K562 (cell line): ENCODE measurements at regions of chr21 and their contacts with region 1.

Region 1: GRCh38 chr21:46228345-46229051 is at the start of gene LSS:
- DNase-seq: peak; percentile 98 to 100 (median 98)
- ATAC-seq: peak; percentile 92
- H3K4me3 ChIP-seq: peak within 1 kb of the TSS; percentile 87
- H3K27ac ChIP-seq: peak within 1 kb of the TSS; percentile 90
- H3K4me1 ChIP-seq: peaks cover 38 to 39% of the 10 kb centered on the region in 2 experiments; a peak in 4 of 5 replicates
- H3K27me3 ChIP-seq: no peaks in the 10 kb centered on the region
- CTCF ChIP-seq: no peak
- EP300 ChIP-seq: no peak
- POLR2A ChIP-seq: no peak; the same call in 1 of the 2 replicates
- RAD21 ChIP-seq: no peak
- polyA plus RNA-seq, gene LSS: 2.2 to 2.7 TPM

Region 2: GRCh38 chr21:46153247-46154150 is 75.0 kb before region 1 on chr21:
- CTCF ChIA-PET with region 1: no interaction called
- POLR2A ChIA-PET with region 1: interaction called, 4 read pairs
- in situ Hi-C with region 1: no loop called
- intact Hi-C with region 1: loop called (anchors 5 kb)
- DNase-seq: peak; percentile 92 to 96 (median 96)
- ATAC-seq: peak; percentile 94
- H3K4me3 ChIP-seq: peak overlapping the region; percentile 14; the same call in 1 of the 2 replicates
- H3K27ac ChIP-seq: peak overlapping the region; percentile 74
- H3K4me1 ChIP-seq: peaks cover 15 to 78% of the 10 kb centered on the region in 2 experiments
- H3K27me3 ChIP-seq: no peaks in the 10 kb centered on the region
- CTCF ChIP-seq: peak; percentile 88 to 98 (median 93)
- EP300 ChIP-seq: peak; percentile 63; the same call in 1 of the 2 replicates
- POLR2A ChIP-seq: 0 out of 2 replicates have a peak, but pooled peaks have one; percentile 62
- RAD21 ChIP-seq: peak; percentile 71 to 80

Region 3: DNA sequence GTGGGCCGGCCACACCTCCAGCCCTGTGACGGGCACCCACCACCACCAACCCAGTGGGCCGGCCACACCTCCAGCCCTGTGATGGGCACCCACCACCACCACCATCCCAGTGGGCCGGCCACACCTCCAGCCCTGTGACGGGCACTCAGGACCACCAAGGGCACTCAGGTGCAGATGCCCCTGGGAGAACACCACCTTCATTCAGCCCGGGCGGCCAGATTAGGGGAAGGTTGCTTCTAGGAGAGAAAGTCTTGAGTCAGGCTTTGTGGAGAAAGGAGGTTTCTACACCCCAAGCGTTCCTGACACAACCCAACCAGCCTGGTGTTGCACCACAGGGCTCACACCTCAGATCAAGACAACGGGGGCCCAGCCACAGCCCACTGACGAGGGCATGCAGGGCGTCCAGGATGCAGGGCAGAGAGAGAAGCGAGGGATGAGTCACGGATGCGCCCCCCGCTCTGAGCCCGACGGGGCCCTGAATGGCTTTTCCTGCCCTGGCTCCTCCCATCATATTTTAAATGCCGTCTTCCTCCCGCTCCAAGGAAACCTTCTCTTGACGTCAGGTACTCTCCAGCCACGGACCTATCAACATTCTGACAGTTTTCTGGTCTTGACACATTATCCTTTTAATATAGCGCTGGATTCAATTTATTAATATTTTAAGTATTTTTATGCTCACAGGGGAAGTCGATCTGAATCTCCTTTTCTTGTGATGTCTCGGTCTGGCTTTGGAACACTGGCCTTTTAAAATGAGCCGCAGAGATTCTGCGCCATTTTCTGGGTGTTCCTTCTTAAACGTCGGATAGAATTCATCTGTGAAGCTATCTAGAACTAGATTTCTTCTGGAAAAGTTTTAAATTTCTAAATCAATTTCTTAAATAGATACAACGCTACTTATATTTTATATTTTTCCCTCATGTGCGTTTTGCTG is 43.6 kb before region 1 on chr21:
- CTCF ChIA-PET with region 1: no interaction called
- POLR2A ChIA-PET with region 1: no interaction called
- in situ Hi-C with region 1: no loop called
- intact Hi-C with region 1: loop called (anchors 5 kb)
- DNase-seq: peak; percentile 75 to 88 (median 86)
- ATAC-seq: peak; percentile 53
- H3K4me3 ChIP-seq: peak overlapping the region; percentile 88
- H3K27ac ChIP-seq: peak overlapping the region; percentile 67
- H3K4me1 ChIP-seq: peaks cover 64 to 85% of the 10 kb centered on the region in 2 experiments
- H3K27me3 ChIP-seq: no peaks in the 10 kb centered on the region
- CTCF ChIP-seq: no peak
- EP300 ChIP-seq: no peak; the same call in 1 of the 2 replicates
- POLR2A ChIP-seq: no peak; the same call in 1 of the 2 replicates
- RAD21 ChIP-seq: no peak

Region 4: GRCh38 chr21:46243960-46244361 is 15.5 kb after region 1 on chr21:
- CTCF ChIA-PET with region 1: no interaction called
- POLR2A ChIA-PET with region 1: interaction called, 27 read pairs
- in situ Hi-C with region 1: no loop called
- intact Hi-C with region 1: no loop called
- DNase-seq: no peak
- ATAC-seq: no peak; the same call in 2 of the 3 replicates
- H3K4me3 ChIP-seq: no peak overlapping the region
- H3K27ac ChIP-seq: no peak overlapping the region; the same call in 2 of the 3 replicates
- H3K4me1 ChIP-seq: peaks cover 7 to 9% of the 10 kb centered on the region in 2 experiments; a peak in 4 of 5 replicates
- H3K27me3 ChIP-seq: no peaks in the 10 kb centered on the region
- CTCF ChIP-seq: no peak
- EP300 ChIP-seq: no peak
- POLR2A ChIP-seq: no peak
- RAD21 ChIP-seq: no peak

Region 5: DNA sequence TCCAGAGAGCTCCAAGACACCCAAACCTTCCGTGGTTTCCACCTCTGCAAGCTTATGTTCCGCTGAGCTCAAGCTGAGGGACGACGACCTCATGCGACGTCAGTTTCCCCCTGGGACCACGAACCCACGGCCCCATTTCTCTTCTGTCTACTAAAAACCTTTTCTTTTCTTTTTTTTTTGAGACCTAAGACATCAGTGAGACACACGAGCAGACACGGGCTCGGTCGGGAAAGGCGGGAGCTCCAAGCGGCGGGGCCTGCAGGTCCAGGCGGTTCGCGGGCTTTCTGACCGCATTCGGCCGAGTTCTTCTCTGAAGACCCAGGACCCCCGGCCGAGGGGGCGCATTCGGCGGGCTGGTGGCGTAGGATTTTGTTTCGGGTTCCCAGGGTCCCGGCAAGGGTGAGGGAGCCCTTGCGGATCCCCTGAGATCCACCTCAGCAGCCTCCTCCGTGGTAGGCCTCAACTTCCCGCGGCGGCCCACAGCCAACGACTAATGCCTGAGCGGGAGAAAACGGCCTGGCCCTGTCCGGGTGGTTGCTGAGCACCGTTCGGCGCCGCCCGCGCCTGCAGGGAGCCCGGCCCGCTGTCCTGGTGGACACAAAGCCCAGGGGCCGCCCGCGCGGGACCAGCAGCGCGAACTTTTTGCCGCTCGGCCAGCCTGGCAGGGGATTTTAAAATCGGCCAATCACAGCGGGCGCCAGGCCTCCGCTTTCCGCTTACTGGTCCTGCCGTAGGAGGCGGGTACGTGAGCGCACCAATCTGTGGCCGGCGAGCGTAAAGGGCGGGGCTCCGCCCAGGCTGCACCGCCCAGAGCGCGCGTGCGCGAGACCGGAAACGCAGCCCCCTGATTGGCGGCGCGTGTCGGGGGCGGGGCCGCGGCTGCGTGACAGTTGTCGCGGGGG is 95.0 kb after region 1 on chr21 and contains the start of gene C21orf58:
- CTCF ChIA-PET with region 1: interaction called, 4 read pairs
- POLR2A ChIA-PET with region 1: interaction called, 6 read pairs
- in situ Hi-C with region 1: no loop called
- intact Hi-C with region 1: loop called (anchors 2 kb)
- DNase-seq: peak; percentile 98 to 100 (median 99)
- ATAC-seq: peak; percentile 84
- H3K4me3 ChIP-seq: peak within 1 kb of the TSS; percentile 89
- H3K27ac ChIP-seq: peak within 1 kb of the TSS; percentile 99
- H3K4me1 ChIP-seq: peaks cover 32 to 61% of the 10 kb centered on the region in 2 experiments; a peak in 4 of 5 replicates
- H3K27me3 ChIP-seq: no peaks in the 10 kb centered on the region
- CTCF ChIP-seq: no peak
- EP300 ChIP-seq: 0 out of 2 replicates have a peak, but pooled peaks have one; percentile 13
- POLR2A ChIP-seq: peak; percentile 96; the same call in 1 of the 2 replicates
- RAD21 ChIP-seq: no peak
- polyA plus RNA-seq, gene C21orf58: 1.2 to 1.9 TPM

Region 6: GRCh38 chr21:46402421-46402820 is 173.9 kb after region 1 on chr21:
- CTCF ChIA-PET with region 1: no interaction called
- POLR2A ChIA-PET with region 1: no interaction called
- in situ Hi-C with region 1: no loop called
- intact Hi-C with region 1: loop called (anchors 10 kb)
- DNase-seq: no peak
- ATAC-seq: no peak
- H3K4me3 ChIP-seq: no peak overlapping the region
- H3K27ac ChIP-seq: no peak overlapping the region
- H3K4me1 ChIP-seq: peaks cover 0 to 4% of the 10 kb centered on the region in 2 experiments; a peak in 1 of 5 replicates
- H3K27me3 ChIP-seq: no peaks in the 10 kb centered on the region
- CTCF ChIP-seq: peak in 2 of 3 experiments; percentile 3 to 22; a peak in 1 of 6 replicates
- EP300 ChIP-seq: no peak
- POLR2A ChIP-seq: no peak
- RAD21 ChIP-seq: no peak

Region 7: DNA sequence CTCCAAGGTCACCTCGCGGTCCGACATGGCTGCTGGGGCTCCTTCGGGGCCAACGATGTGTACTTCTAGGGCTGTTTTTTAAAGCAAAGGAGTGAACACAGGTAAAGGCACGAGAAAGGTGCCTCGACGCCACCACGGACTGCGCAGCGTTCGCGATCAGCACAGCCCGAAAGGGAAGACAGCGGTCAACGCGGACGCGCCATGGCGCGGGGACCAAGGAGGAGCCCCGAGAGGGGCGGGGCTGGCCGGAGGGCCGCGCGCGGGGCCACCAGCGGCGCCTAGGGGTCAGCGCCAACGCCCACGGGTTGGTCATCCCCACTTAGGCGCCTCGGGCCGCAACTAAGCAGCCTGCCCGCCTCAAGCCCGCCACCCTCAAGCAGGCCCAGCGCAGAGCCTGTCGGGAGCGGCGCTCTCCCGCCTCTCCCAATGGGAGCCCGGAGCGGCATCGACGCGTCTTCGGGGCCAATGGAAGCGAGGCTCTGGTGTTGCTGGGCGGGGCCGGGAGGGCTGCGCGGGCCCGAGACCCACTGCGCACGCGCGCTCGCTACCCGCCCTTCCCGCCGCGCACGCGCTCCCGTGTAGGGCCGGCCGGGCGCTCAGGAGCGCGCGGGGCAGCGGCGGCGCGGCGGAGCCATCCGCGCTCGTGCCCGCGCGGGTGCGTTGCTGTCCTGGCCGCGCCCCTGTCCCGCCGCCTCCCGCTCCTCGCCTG is 230.0 kb after region 1 on chr21 and contains the start of gene DIP2A:
- CTCF ChIA-PET with region 1: no interaction called
- POLR2A ChIA-PET with region 1: interaction called, 3 read pairs
- in situ Hi-C with region 1: no loop called
- intact Hi-C with region 1: loop called (anchors 10 kb)
- DNase-seq: peak; percentile 99 to 100 (median 99)
- ATAC-seq: peak; percentile 97
- H3K4me3 ChIP-seq: peak within 1 kb of the TSS; percentile 69
- H3K27ac ChIP-seq: peak within 1 kb of the TSS; percentile 97
- H3K4me1 ChIP-seq: peaks cover 28 to 30% of the 10 kb centered on the region in 2 experiments
- H3K27me3 ChIP-seq: no peaks in the 10 kb centered on the region
- CTCF ChIP-seq: peak; percentile 47 to 60 (median 55); a peak in 5 of 6 replicates
- EP300 ChIP-seq: peak; percentile 56; the same call in 1 of the 2 replicates
- POLR2A ChIP-seq: peak; percentile 96
- RAD21 ChIP-seq: peak in 1 of 2 experiments; percentile 20; a peak in 3 of 4 replicates
- polyA plus RNA-seq, gene DIP2A: 4.3 to 4.6 TPM